GM12878 (cell line): ENCODE measurements at regions of chr5 and their contacts with region 1.

Region 1: GRCh38 chr5:116574367-116575325 is at the start of gene SEMA6A:
- DNase-seq: peak; percentile 81
- ATAC-seq: peak; percentile 68
- H3K4me3 ChIP-seq: peak within 1 kb of the TSS; percentile 85
- H3K27ac ChIP-seq: no peak within 1 kb of the TSS; the same call in 1 of the 2 replicates
- H3K4me1 ChIP-seq: peaks cover 14% of the 10 kb centered on the region
- H3K27me3 ChIP-seq: peaks cover 2 to 20% of the 10 kb centered on the region in 2 experiments
- CTCF ChIP-seq: peak in 1 of 3 experiments; percentile 14; a peak in 1 of 6 replicates
- EP300 ChIP-seq: peak in 1 of 2 experiments; percentile 51; a peak in 1 of 4 replicates
- POLR2A ChIP-seq: peak; percentile 67
- RAD21 ChIP-seq: no peak; the same call in 1 of the 2 replicates
- polyA plus RNA-seq, gene SEMA6A: 0.16 to 0.22 TPM

Region 2: GRCh38 chr5:116442095-116442534 is 132.5 kb before region 1 on chr5:
- CTCF ChIA-PET with region 1: no interaction called
- POLR2A ChIA-PET with region 1: no interaction called
- RAD21 ChIA-PET with region 1: no interaction called
- SMC1A ChIA-PET with region 1: no interaction called
- in situ Hi-C with region 1: no loop called
- intact Hi-C with region 1: no loop called
- DNase-seq: no peak
- ATAC-seq: no peak
- H3K4me3 ChIP-seq: no peak overlapping the region
- H3K27ac ChIP-seq: no peak overlapping the region
- H3K4me1 ChIP-seq: peaks cover 4% of the 10 kb centered on the region; the same call in 1 of the 2 replicates
- H3K27me3 ChIP-seq: no peaks in the 10 kb centered on the region
- CTCF ChIP-seq: no peak
- EP300 ChIP-seq: no peak
- POLR2A ChIP-seq: no peak
- RAD21 ChIP-seq: no peak

Region 3: DNA sequence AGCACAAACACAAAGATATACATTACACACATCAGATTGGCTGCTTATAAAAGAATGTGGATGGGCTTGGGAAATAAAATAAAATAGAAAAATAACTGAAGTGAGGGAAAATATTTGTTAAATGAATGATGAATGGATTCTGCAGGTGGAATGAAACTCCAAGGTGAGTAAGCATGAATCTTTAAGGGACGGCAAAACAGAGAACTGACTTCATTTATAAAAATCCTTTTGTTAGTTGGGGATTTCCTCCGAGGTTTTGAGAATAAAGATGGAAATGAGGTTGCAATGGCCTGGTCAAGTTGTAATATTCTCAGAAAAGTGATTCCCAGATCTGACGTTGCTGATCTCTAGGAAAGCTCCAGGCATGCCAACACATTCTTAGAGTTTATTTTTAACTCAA is 20.9 kb after region 1 on chr5:
- CTCF ChIA-PET with region 1: interaction called, 6 read pairs
- POLR2A ChIA-PET with region 1: interaction called, 5 read pairs
- RAD21 ChIA-PET with region 1: interaction called, 13 read pairs
- SMC1A ChIA-PET with region 1: interaction called, 25 read pairs
- in situ Hi-C with region 1: no loop called
- intact Hi-C with region 1: no loop called
- DNase-seq: no peak
- ATAC-seq: peak; percentile 68
- H3K4me3 ChIP-seq: no peak overlapping the region
- H3K27ac ChIP-seq: no peak overlapping the region
- H3K4me1 ChIP-seq: no peaks in the 10 kb centered on the region
- H3K27me3 ChIP-seq: no peaks in the 10 kb centered on the region
- CTCF ChIP-seq: no peak
- EP300 ChIP-seq: no peak
- POLR2A ChIP-seq: no peak
- RAD21 ChIP-seq: no peak

Region 4: GRCh38 chr5:116640236-116640635 is 65.6 kb after region 1 on chr5:
- CTCF ChIA-PET with region 1: interaction called, 3 read pairs
- POLR2A ChIA-PET with region 1: interaction called, 5 read pairs
- RAD21 ChIA-PET with region 1: interaction called, 12 read pairs
- SMC1A ChIA-PET with region 1: interaction called, 5 read pairs
- in situ Hi-C with region 1: no loop called
- intact Hi-C with region 1: no loop called
- DNase-seq: no peak
- ATAC-seq: no peak
- H3K4me3 ChIP-seq: no peak overlapping the region
- H3K27ac ChIP-seq: no peak overlapping the region
- H3K4me1 ChIP-seq: no peaks in the 10 kb centered on the region
- H3K27me3 ChIP-seq: no peaks in the 10 kb centered on the region
- CTCF ChIP-seq: no peak
- EP300 ChIP-seq: no peak
- POLR2A ChIP-seq: no peak
- RAD21 ChIP-seq: no peak

Region 5: GRCh38 chr5:116671211-116671736 is 96.6 kb after region 1 on chr5:
- CTCF ChIA-PET with region 1: interaction called, 18 read pairs
- POLR2A ChIA-PET with region 1: interaction called, 39 read pairs
- RAD21 ChIA-PET with region 1: interaction called, 179 read pairs
- SMC1A ChIA-PET with region 1: interaction called, 95 read pairs
- in situ Hi-C with region 1: no loop called
- intact Hi-C with region 1: loop called (anchors 1 kb)
- DNase-seq: peak; percentile 90
- ATAC-seq: peak; percentile 93
- H3K4me3 ChIP-seq: no peak overlapping the region; the same call in 1 of the 2 replicates
- H3K27ac ChIP-seq: peak overlapping the region; percentile 30; the same call in 1 of the 2 replicates
- H3K4me1 ChIP-seq: peaks cover 42% of the 10 kb centered on the region
- H3K27me3 ChIP-seq: no peaks in the 10 kb centered on the region
- CTCF ChIP-seq: no peak
- EP300 ChIP-seq: peak; percentile 87 to 95; a peak in 3 of 4 replicates
- POLR2A ChIP-seq: 0 out of 2 replicates have a peak, but pooled peaks have one; percentile 29
- RAD21 ChIP-seq: no peak

Region 6: DNA sequence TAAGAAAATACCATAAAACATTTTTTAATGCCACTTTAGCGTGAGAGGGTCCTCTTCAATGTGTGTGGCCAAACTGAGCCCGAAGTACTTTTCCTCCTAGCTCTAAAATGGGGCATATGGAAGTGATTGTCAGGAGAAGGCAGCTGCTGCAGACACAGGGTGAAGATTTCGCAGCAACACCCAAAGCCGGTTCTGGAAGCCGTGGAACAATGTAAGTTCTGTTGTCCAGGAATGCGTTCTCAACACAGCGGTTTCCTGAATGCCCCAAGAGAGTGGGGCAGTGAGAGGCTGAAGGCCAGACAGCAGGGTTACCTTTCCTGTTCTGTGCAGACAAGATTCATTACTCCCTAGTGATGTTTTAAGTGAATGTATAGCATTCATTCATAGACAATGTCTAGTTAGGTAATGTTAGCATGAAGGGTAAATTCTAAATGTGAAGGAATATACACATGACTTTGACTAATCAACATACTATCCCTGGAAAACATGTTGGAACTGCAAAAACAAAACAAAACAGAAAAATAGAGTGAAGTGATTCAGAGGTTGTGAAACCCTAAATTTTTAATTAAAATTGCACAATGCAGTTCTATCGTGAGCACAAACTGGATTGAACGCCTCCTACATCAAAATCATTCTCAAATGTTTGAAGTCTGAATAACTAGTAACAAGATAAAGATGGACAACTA is 197.0 kb after region 1 on chr5:
- CTCF ChIA-PET with region 1: interaction called, 4 read pairs
- POLR2A ChIA-PET with region 1: interaction called, 3 read pairs
- RAD21 ChIA-PET with region 1: interaction called, 217 read pairs
- SMC1A ChIA-PET with region 1: interaction called, 133 read pairs
- in situ Hi-C with region 1: no loop called
- intact Hi-C with region 1: no loop called
- DNase-seq: no peak
- ATAC-seq: no peak
- H3K4me3 ChIP-seq: no peak overlapping the region
- H3K27ac ChIP-seq: no peak overlapping the region
- H3K4me1 ChIP-seq: peaks cover under 1% of the 10 kb centered on the region; the same call in 1 of the 2 replicates
- H3K27me3 ChIP-seq: no peaks in the 10 kb centered on the region
- CTCF ChIP-seq: no peak
- EP300 ChIP-seq: no peak
- POLR2A ChIP-seq: no peak
- RAD21 ChIP-seq: no peak

Region 7: DNA sequence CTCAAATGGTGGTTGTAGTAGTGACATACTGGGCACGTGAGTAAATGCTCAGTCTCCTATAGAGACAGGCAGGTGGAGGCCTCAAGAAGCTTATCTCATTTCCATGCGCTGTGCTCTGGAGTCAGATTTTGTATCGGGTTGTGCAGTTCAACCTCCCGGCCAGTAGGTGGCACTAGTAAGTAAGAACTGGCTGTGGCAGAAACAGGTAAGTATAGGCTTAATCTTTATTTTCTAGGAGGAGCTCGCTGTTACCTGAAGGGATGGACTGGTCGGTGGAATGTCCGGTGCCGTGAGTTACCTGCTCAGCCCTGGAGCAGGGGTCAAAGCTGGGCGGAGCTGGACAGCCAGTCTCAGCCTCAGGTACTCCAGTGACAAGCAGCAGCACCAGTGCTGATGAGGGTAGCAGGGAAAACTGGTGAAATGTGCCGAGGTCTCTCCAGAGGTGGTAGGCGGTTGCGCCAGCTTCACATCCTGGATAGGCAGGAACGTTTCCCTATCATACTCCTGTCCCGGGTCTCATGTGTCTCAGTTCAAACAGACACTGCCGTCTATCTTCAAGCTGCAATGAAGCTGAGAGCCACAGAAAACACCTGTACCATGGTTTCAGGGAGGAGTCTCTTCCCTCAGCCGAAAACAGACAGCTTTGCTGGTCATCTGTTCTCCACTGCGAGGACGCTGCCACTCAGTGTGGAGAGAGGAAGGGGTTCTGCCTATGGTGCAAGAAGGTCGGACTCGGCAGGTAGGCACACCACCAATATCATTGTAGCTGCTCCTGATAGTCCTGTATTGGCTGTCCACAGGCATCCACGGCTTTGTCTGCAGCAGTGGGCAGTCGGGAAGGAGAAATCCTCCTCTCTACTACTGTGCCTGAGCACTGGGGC is 880.3 kb after region 1 on chr5:
- CTCF ChIA-PET with region 1: interaction called, 5 read pairs
- POLR2A ChIA-PET with region 1: no interaction called
- RAD21 ChIA-PET with region 1: interaction called, 3 read pairs
- SMC1A ChIA-PET with region 1: interaction called, 3 read pairs
- in situ Hi-C with region 1: no loop called
- intact Hi-C with region 1: loop called (anchors 10 kb)
- DNase-seq: peak; percentile 20
- ATAC-seq: peak; percentile 95
- H3K4me3 ChIP-seq: peak overlapping the region; percentile 1; the same call in 1 of the 2 replicates
- H3K27ac ChIP-seq: no peak overlapping the region
- H3K4me1 ChIP-seq: no peaks in the 10 kb centered on the region
- H3K27me3 ChIP-seq: no peaks in the 10 kb centered on the region
- CTCF ChIP-seq: peak; percentile 80 to 91 (median 87)
- EP300 ChIP-seq: no peak
- POLR2A ChIP-seq: no peak
- RAD21 ChIP-seq: peak; percentile 81